Right cardiac atrium (tissue), 5 donors: ENCODE measurements at regions of chr7 and their contacts with region 1.

Region 1: DNA sequence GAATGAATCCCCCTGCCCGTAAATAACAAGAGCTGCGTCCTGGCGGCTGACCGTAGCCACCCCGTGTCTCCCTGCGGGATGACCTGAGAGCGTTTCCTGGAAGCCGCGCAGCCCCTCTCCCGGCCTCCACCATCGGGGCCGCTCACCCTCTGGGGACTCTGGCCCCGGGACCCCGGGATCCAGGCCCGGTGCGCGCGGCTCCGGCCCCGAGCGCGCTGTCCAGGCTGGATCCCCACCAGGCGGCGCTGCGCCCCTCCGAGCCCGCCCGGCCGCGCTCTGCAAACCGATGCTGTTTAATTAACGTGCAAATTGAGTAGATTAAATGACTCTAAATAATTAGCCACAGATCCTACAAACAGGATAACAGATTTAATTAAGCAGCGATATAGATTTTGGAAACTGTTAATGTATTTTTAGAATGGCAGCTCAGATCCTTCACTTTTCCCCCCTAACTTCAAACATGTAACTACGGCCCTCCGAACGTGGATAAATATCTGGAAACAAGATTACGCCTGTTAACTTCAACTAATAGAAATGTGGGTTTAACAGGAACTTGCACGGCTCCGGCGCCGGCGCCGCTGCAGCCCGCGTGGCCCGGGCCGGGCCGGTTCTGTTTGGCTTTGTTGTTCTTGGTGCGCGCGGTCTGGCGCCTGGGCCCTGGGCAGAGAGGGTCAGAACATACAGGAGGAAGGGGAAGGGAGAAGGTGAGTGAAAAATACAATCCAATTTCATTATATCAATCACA is 7.1 kb upstream of the UNCX start:
- DNase-seq: no peak
- ATAC-seq: peak; percentile 42 to 67
- H3K4me3 ChIP-seq: no peak overlapping the region
- H3K27ac ChIP-seq: no peak overlapping the region
- H3K4me1 ChIP-seq: no peaks in the 10 kb centered on the region
- H3K27me3 ChIP-seq: peaks cover 6% of the 10 kb centered on the region

Region 2: DNA sequence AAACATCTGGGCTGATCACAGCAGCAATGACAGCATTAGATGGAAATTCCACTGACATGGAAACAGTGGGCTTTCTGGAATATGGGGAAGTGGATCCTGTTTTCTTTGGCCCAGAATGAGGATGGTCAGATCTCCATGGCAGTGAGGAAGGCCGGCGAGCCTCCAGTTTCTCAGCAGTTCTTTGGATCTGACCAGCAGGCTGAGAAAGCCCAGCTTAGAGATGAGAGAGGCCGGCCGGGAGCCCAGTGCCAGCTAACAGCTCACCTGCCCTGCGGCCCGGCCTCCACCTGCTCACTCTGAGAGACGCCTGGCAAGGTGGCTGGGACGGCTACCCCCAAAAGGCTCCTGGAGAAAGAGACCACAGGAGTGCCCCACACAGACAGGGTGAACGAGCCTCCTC is 113.5 kb before region 1 on chr7:
- intact Hi-C with region 1: no loop called
- DNase-seq: peak in 2 of 3 donors; percentile 57 to 67
- ATAC-seq: peak; percentile 65 to 78
- H3K4me3 ChIP-seq: no peak overlapping the region
- H3K27ac ChIP-seq: no peak overlapping the region
- H3K4me1 ChIP-seq: no peaks in the 10 kb centered on the region
- H3K27me3 ChIP-seq: no peaks in the 10 kb centered on the region

Region 3: GRCh38 chr7:1403638-1404459 is 178.2 kb after region 1 on chr7:
- intact Hi-C with region 1: loop called in 1 of 4 experiments (anchors 10 kb)
- DNase-seq: peak in 1 of 3 donors; percentile 61
- ATAC-seq: peak; percentile 13 to 67
- H3K4me3 ChIP-seq: no peak overlapping the region
- H3K27ac ChIP-seq: no peak overlapping the region
- H3K4me1 ChIP-seq: no peaks in the 10 kb centered on the region
- H3K27me3 ChIP-seq: no peaks in the 10 kb centered on the region

Region 4: GRCh38 chr7:1412322-1413261 is 187.0 kb after region 1 on chr7:
- intact Hi-C with region 1: loop called in 3 of 4 experiments (anchors 10 kb)
- DNase-seq: peak; percentile 85 to 95 (median 92)
- ATAC-seq: peak; percentile 87 to 94
- H3K4me3 ChIP-seq: no peak overlapping the region
- H3K27ac ChIP-seq: no peak overlapping the region
- H3K4me1 ChIP-seq: no peaks in the 10 kb centered on the region
- H3K27me3 ChIP-seq: no peaks in the 10 kb centered on the region

Region 5: DNA sequence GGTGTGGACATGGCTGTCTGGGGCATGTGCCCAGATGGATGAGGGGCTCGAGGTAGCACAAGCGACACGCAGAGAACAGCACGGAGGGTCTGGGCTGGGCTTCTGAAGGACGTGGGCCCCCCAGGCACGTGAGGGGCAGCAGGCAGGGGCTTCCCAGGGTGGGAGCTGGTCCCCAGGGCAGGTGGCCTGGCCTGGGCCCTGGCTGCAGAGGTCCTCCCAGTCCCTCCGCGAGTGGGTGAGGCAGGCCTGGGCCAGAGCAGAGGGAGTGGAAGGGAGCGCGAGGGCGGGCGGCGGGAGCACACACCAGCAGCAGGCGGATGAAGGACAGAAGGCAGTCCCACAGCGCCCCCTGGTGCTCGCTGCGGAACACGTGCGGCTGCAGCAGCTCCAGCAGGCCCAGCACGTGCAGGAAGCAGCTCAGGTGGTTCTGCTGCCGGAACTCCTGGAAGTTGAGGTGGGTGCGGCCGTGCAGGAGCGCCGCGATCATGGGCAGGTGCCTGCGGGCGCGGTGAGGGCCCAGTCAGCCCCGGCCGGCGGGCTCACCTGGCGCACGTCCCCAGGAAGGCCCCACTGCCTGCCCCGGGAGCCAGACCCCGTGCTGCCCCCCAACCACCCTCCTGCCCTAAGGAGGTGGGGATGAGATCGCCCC is 248.4 kb after region 1 on chr7:
- intact Hi-C with region 1: loop called in 3 of 4 experiments (anchors 5 to 10 kb)
- DNase-seq: peak; percentile 88 to 95 (median 95)
- ATAC-seq: peak; percentile 57 to 76
- H3K4me3 ChIP-seq: no peak overlapping the region
- H3K27ac ChIP-seq: no peak overlapping the region
- H3K4me1 ChIP-seq: no peaks in the 10 kb centered on the region
- H3K27me3 ChIP-seq: no peaks in the 10 kb centered on the region